Gastrocnemius medialis (tissue), 4 donors: ENCODE measurements at regions of chr7 and their contacts with region 1.

Region 1: GRCh38 chr7:111752022-111752582 is 189.8 kb upstream of the IMMP2L start:
- DNase-seq: no peak
- ATAC-seq: peak in 1 of 2 donors; percentile 36
- H3K4me3 ChIP-seq: no peak overlapping the region
- H3K27ac ChIP-seq: no peak overlapping the region
- H3K4me1 ChIP-seq: no peaks in the 10 kb centered on the region
- H3K27me3 ChIP-seq: no peaks in the 10 kb centered on the region
- CTCF ChIP-seq: peak; percentile 36 to 67 (median 52)
- POLR2A ChIP-seq: no peak

Region 2: DNA sequence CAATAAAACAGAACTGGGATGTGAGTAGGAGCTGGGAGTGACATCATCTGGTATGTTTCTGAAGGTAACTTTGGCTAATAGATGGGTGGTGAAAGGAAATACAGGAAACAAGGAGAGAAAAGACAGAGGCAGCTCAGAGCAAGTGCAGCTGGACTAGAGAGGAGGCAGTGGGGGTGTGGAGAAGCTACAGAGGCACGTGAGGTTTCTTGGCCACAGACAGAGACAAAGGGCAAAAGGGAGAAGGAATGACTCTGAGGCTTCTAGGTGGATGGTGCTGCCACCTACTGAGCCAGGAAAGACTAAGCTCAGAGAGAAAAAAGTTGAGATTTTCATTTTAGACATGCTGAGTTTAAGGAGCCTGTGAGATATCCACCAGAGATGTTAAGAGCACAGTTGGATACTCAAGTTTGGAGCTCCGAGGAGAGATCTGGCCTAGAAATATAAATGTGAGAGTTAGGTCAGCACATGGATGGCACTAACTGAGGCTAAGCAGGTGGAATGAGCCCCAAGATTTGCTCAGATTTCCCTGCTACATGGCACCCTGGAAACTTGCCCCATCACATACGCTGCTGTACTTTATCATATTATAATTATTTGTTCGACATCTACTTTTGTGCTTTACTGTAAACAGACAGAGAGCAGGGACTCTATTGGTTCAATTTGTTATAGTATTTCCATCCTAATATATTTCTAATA is 103.2 kb after region 1 on chr7:
- in situ Hi-C with region 1: no loop called
- intact Hi-C with region 1: loop called (anchors 1 kb)
- DNase-seq: peak in 1 of 2 donors; percentile 16
- ATAC-seq: peak; percentile 42 to 61
- H3K4me3 ChIP-seq: no peak overlapping the region
- H3K27ac ChIP-seq: no peak overlapping the region
- H3K4me1 ChIP-seq: no peaks in the 10 kb centered on the region
- H3K27me3 ChIP-seq: no peaks in the 10 kb centered on the region
- CTCF ChIP-seq: peak in 3 of 5 experiments; percentile 14 to 26 (median 15)
- POLR2A ChIP-seq: no peak

Region 3: GRCh38 chr7:112422842-112423496 is 670.9 kb after region 1 on chr7:
- in situ Hi-C with region 1: loop called in 1 of 4 experiments (anchors 25 kb)
- intact Hi-C with region 1: loop called (anchors 10 kb)
- DNase-seq: peak; percentile 71 to 79
- ATAC-seq: peak; percentile 89 to 91
- H3K4me3 ChIP-seq: no peak overlapping the region
- H3K27ac ChIP-seq: peak overlapping the region; percentile 71 to 78 (median 73)
- H3K4me1 ChIP-seq: peaks cover 7 to 25% of the 10 kb centered on the region in 2 donors
- H3K27me3 ChIP-seq: no peaks in the 10 kb centered on the region
- CTCF ChIP-seq: no peak
- POLR2A ChIP-seq: no peak

Region 4: DNA sequence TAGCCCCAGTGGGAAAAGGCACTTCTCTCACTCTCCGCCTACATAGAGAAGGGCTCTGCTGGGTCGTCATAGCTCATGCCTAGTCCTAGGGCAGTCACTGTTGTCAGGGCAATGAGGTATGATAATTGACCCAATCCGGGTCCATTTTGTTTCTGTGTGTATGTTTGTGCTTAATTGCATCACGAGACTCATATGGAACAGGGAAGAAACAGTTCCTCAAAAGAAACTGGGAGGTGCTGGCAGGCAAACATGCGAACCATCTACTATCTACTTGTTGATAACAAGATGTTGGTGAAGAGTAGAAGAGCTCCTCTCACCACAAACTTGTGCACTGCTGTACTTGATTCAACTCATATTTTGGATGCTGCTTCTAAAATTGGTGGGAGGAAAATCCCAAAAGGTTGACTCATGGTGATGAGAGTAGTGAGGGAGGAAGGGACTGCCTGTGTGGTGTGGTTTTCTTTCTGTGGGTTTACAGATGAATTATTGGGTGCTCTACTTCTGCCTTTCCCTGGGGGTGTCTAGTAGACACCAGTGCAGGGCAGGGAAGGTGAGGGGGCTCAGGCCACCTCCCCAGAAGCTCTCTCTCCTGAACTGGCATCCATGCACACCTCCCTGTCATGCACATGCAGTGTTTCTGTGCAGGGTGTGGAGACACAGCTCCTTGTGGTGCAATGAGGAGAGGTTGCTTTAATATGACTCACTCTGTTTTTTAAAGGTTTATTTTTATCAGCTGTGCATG is 758.1 kb after region 1 on chr7:
- in situ Hi-C with region 1: loop called in 1 of 4 experiments (anchors 25 kb)
- intact Hi-C with region 1: no loop called
- DNase-seq: no peak
- ATAC-seq: peak in 1 of 2 donors; percentile 27
- H3K4me3 ChIP-seq: no peak overlapping the region
- H3K27ac ChIP-seq: no peak overlapping the region
- H3K4me1 ChIP-seq: no peaks in the 10 kb centered on the region
- H3K27me3 ChIP-seq: no peaks in the 10 kb centered on the region
- CTCF ChIP-seq: no peak
- POLR2A ChIP-seq: no peak